ENCODE measurements at regions of chr2 and their contacts with region 1.

Region 1: DNA sequence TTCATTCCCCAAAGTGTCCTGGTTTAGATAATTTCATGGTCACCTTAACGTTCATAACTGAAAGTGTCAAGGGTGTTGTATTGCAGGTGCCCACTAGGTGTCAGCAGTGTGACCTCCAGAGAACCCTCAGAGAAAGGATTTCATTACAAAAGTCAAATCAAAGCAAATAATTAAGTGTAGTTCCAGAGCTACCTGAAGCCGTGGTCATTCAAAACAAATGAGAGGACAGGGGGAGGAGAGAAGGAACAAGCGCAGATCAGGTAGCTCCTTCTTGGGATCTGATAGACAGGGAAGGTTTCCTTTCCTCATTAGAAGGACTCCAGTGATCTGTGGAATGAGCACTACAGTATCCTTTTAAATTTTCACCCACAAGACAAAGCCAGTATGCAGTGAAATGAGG is at the start of gene SLC9A4:
- DNase-seq: peak; percentile 80
- ATAC-seq: peak; percentile 75
- H3K4me3 Mint-ChIP-seq: no peak within 1 kb of the TSS
- H3K27ac Mint-ChIP-seq: no peak within 1 kb of the TSS
- H3K4me1 Mint-ChIP-seq: no peaks in the 10 kb centered on the region
- H3K27me3 Mint-ChIP-seq: peaks cover 15% of the 10 kb centered on the region
- CTCF ChIP-seq: peak; percentile 74
- total RNA-seq, gene SLC9A4: 0.07 TPM in 1 of 2 experiments, not detected in the other

Region 2: GRCh38 chr2:102487761-102488466 is 14.9 kb after region 1 on chr2:
- CTCF ChIA-PET with region 1: interaction called, 38 read pairs
- POLR2A ChIA-PET with region 1: interaction called, 4 read pairs
- intact Hi-C with region 1: no loop called
- DNase-seq: no peak
- ATAC-seq: no peak
- H3K4me3 Mint-ChIP-seq: no peak overlapping the region
- H3K27ac Mint-ChIP-seq: no peak overlapping the region
- H3K4me1 Mint-ChIP-seq: peaks cover 15% of the 10 kb centered on the region
- H3K27me3 Mint-ChIP-seq: peaks cover 15% of the 10 kb centered on the region
- CTCF ChIP-seq: no peak

Region 3: GRCh38 chr2:102592597-102592996 is 119.6 kb after region 1 on chr2:
- CTCF ChIA-PET with region 1: interaction called, 25 read pairs
- POLR2A ChIA-PET with region 1: no interaction called
- intact Hi-C with region 1: loop called (anchors 5 kb)
- DNase-seq: peak; percentile 42
- ATAC-seq: no peak
- H3K4me3 Mint-ChIP-seq: no peak overlapping the region
- H3K27ac Mint-ChIP-seq: no peak overlapping the region
- H3K4me1 Mint-ChIP-seq: no peaks in the 10 kb centered on the region
- H3K27me3 Mint-ChIP-seq: peaks cover 15% of the 10 kb centered on the region
- CTCF ChIP-seq: peak; percentile 44

Region 4: GRCh38 chr2:102615622-102616436 is 142.8 kb after region 1 on chr2:
- CTCF ChIA-PET with region 1: interaction called, 99 read pairs
- POLR2A ChIA-PET with region 1: no interaction called
- intact Hi-C with region 1: loop called (anchors 2 kb)
- DNase-seq: peak; percentile 69
- ATAC-seq: peak; percentile 89
- H3K4me3 Mint-ChIP-seq: no peak overlapping the region
- H3K27ac Mint-ChIP-seq: no peak overlapping the region
- H3K4me1 Mint-ChIP-seq: peaks cover 13% of the 10 kb centered on the region
- H3K27me3 Mint-ChIP-seq: peaks cover 36% of the 10 kb centered on the region
- CTCF ChIP-seq: peak; percentile 91

Measured in activated CD8-positive, alpha-beta T cell treated with anti-CD3 and anti-CD28 coated beads for 36 hours (primary cell).